HEK293 (cell line): ENCODE measurements at regions of chr1 and their contacts with region 1.

Region 1: DNA sequence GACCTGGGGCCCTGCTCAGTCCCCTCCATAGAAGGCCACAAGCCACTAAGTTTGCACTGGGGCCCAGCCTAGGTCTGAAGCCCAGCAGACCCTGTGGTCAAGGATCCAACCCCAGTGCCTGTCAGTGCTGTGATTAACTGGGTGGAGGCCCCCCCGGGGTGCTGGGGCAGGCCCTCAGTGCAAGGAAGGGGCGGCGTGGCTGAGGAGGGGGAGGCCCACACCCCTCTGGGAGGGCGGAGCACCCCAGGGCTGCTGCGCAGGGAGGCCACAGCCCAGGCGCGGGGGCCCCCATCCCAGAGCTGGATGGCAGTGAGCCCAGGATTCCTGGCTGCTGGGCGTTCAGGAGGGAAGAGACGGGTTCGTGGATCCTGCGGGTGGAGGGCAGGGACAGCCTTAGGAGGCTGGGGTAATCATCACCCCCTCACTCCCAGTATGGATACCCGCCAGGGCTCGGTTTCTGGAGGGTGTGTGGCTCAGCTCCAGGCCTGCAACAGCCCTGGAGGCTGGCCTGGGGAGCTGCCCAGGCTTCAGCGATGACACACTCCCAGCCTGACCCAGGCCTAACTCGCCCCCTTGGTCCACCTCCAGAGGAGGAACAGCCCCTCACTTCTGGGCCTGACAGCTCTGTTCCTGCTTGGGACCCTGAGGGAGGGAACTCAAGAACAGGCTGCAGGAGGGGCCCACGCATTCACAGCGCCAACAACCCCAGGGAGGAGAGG is 890 bp downstream of the GJC2 start:
- H3K4me3 ChIP-seq: no peak overlapping the region
- H3K27ac ChIP-seq: no peak overlapping the region
- H3K4me1 ChIP-seq: peaks cover 3% of the 10 kb centered on the region; the same call in 1 of the 2 replicates
- CTCF ChIP-seq: no peak

Region 2: GRCh38 chr1:228174482-228175375 is 24.1 kb after region 1 on chr1:
- CTCF ChIA-PET with region 1: interaction called, 11 read pairs
- POLR2A ChIA-PET with region 1: no interaction called
- H3K4me3 ChIP-seq: no peak overlapping the region
- H3K27ac ChIP-seq: no peak overlapping the region
- H3K4me1 ChIP-seq: no peaks in the 10 kb centered on the region
- CTCF ChIP-seq: no peak

Region 3: GRCh38 chr1:228420963-228421826 is 270.6 kb after region 1 on chr1:
- CTCF ChIA-PET with region 1: no interaction called
- POLR2A ChIA-PET with region 1: no interaction called
- H3K4me3 ChIP-seq: no peak overlapping the region
- H3K27ac ChIP-seq: no peak overlapping the region
- H3K4me1 ChIP-seq: no peaks in the 10 kb centered on the region
- CTCF ChIP-seq: no peak